OCI-LY7 (cell line): ENCODE measurements at regions of chr17 and their contacts with region 1.

Region 1: DNA sequence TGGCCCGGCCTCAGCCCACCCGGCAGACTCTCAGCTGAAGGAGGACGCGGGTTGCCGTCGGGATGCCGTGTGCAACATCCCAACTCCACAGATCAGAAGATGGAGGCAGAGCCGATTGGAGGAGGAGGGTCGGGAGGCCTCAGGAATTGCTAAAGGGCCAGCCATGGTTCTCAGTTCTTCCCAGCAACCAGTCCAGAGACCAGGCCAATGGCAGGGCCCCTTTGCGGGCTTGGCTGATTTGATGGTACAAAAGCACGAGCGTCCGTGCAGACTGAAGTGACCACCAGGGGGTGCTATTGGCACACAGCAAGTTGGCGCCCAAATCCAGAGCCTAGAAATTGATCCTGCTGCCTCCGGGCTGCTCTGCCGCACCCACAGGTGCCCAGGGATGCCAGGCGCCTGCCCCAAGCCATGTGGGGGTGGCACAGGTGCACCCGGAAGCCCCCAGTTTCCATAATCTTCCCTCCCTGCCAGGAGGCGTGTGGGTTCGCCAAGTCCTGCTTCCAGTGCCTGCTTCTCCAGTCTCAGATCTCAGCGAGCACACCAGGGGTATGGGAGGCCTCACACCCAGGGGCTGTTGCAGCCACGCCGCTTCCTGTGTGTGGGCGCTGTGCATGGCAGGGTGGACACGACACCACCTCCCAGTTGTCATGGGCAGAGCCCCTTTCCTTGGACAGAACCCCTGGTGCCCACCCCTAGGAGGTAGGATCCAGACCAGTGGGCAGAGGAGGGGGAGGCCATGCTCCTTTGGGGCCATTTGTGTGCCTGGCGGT is 7.1 kb upstream of the TEX19 start:
- DNase-seq: peak; percentile 98
- H3K4me3 ChIP-seq: peak overlapping the region; percentile 55
- H3K27ac ChIP-seq: peak overlapping the region; percentile 97
- H3K4me1 ChIP-seq: peaks cover 67% of the 10 kb centered on the region
- CTCF ChIP-seq: peak; percentile 100

Region 2: GRCh38 chr17:82370471-82371332 is 18.8 kb after region 1 on chr17:
- CTCF ChIA-PET with region 1: interaction called, 11 read pairs
- POLR2A ChIA-PET with region 1: interaction called, 15 read pairs
- intact Hi-C with region 1: loop called (anchors 1 kb)
- DNase-seq: peak; percentile 87
- H3K4me3 ChIP-seq: peak overlapping the region; percentile 48
- H3K27ac ChIP-seq: peak overlapping the region; percentile 80
- H3K4me1 ChIP-seq: peaks cover 59% of the 10 kb centered on the region
- CTCF ChIP-seq: no peak

Region 3: GRCh38 chr17:82418001-82418986 is 66.4 kb after region 1 on chr17 and contains the starts of genes HEXD and OGFOD3:
- CTCF ChIA-PET with region 1: interaction called, 4 read pairs
- POLR2A ChIA-PET with region 1: interaction called, 20 read pairs
- intact Hi-C with region 1: loop called (anchors 1 kb)
- DNase-seq: peak; percentile 96
- H3K4me3 ChIP-seq: peak within 1 kb of the TSS; percentile 84
- H3K27ac ChIP-seq: peak within 1 kb of the TSS; percentile 66
- H3K4me1 ChIP-seq: peaks cover 20% of the 10 kb centered on the region
- CTCF ChIP-seq: no peak
- total RNA-seq, gene HEXD: 88.8 and 93.2 TPM in 2 replicates
- total RNA-seq, gene OGFOD3: 46.9 and 55.6 TPM in 2 replicates

Region 4: GRCh38 chr17:82494236-82495055 is 142.5 kb after region 1 on chr17:
- CTCF ChIA-PET with region 1: interaction called, 3 read pairs
- POLR2A ChIA-PET with region 1: no interaction called
- intact Hi-C with region 1: loop called (anchors 1 kb)
- DNase-seq: peak; percentile 91
- H3K4me3 ChIP-seq: peak overlapping the region; percentile 38
- H3K27ac ChIP-seq: peak overlapping the region; percentile 54
- H3K4me1 ChIP-seq: peaks cover 68% of the 10 kb centered on the region
- CTCF ChIP-seq: peak; percentile 93

Region 5: DNA sequence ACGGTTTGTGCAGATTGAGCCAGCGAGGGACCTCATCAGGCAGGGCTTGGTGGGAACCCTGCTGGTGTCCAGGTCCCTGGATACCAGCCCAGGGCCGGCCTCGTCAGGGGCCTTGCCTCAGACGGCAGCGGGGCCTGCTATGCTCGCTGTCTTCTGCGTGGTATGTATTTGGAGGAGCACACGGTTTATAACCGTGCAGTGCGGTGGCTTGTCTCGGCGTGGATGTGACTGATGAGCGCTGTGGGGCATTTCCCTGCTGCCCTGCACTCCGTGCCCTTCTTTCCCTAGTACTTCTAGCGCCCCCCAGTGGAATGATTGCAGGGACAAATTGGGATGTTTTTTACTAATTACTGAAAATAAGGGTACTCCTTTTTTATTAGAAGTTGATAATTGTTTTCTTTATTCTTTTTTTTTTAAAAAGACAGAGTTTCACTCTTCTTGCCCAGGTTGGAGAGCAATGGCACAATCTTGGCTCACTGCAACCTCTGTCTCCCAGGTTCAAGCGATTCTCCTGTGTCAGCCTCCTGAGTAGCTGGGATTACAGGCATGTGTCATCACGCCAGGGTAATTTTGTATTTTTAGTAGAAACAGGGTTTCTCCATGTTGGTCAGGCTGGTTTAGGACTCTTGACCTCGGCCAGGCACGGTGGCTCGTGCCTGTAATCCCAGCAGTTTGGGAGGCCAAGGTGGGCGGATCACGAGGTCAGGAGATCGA is 415.3 kb after region 1 on chr17:
- CTCF ChIA-PET with region 1: no interaction called
- POLR2A ChIA-PET with region 1: no interaction called
- intact Hi-C with region 1: loop called (anchors 5 kb)
- DNase-seq: peak; percentile 73
- H3K4me3 ChIP-seq: no peak overlapping the region
- H3K27ac ChIP-seq: no peak overlapping the region
- H3K4me1 ChIP-seq: no peaks in the 10 kb centered on the region
- CTCF ChIP-seq: peak; percentile 92